Activated CD4-positive, alpha-beta T cell treated with anti-CD3 and anti-CD28 coated beads for 36 hours (primary cell): ENCODE measurements at regions of chr7 and their contacts with region 1.

Region 1: GRCh38 chr7:128425850-128426249 is 16.1 kb upstream of the IMPDH1 start:
- DNase-seq: peak; percentile 91
- ATAC-seq: peak; percentile 82
- H3K4me3 Mint-ChIP-seq: no peak overlapping the region
- H3K27ac Mint-ChIP-seq: no peak overlapping the region
- H3K4me1 Mint-ChIP-seq: no peaks in the 10 kb centered on the region
- H3K27me3 Mint-ChIP-seq: peaks cover 12% of the 10 kb centered on the region

Region 2: GRCh38 chr7:127359011-127359410 is 1066.8 kb before region 1 on chr7:
- CTCF ChIA-PET with region 1: no interaction called
- POLR2A ChIA-PET with region 1: no interaction called
- intact Hi-C with region 1: no loop called
- DNase-seq: no peak
- ATAC-seq: no peak
- H3K4me3 Mint-ChIP-seq: no peak overlapping the region
- H3K27ac Mint-ChIP-seq: no peak overlapping the region
- H3K4me1 Mint-ChIP-seq: peaks cover 4% of the 10 kb centered on the region
- H3K27me3 Mint-ChIP-seq: no peaks in the 10 kb centered on the region

Region 3: GRCh38 chr7:128387216-128388144 is 38.4 kb before region 1 on chr7:
- CTCF ChIA-PET with region 1: interaction called, 30 read pairs
- POLR2A ChIA-PET with region 1: no interaction called
- intact Hi-C with region 1: no loop called
- DNase-seq: peak; percentile 84
- ATAC-seq: peak; percentile 83
- H3K4me3 Mint-ChIP-seq: no peak overlapping the region
- H3K27ac Mint-ChIP-seq: no peak overlapping the region
- H3K4me1 Mint-ChIP-seq: peaks cover 2% of the 10 kb centered on the region
- H3K27me3 Mint-ChIP-seq: no peaks in the 10 kb centered on the region

Region 4: GRCh38 chr7:128409596-128410160 is 16.2 kb before region 1 on chr7 and contains the start of gene IMPDH1:
- CTCF ChIA-PET with region 1: interaction called, 185 read pairs
- POLR2A ChIA-PET with region 1: interaction called, 3 read pairs
- intact Hi-C with region 1: loop called (anchors 1 to 2 kb)
- DNase-seq: peak; percentile 92
- ATAC-seq: peak; percentile 85
- H3K4me3 Mint-ChIP-seq: peak within 1 kb of the TSS; percentile 78
- H3K27ac Mint-ChIP-seq: peak within 1 kb of the TSS; percentile 78
- H3K4me1 Mint-ChIP-seq: peaks cover 27% of the 10 kb centered on the region
- H3K27me3 Mint-ChIP-seq: no peaks in the 10 kb centered on the region
- total RNA-seq, gene IMPDH1: 59.0 to 60.7 TPM

Region 5: DNA sequence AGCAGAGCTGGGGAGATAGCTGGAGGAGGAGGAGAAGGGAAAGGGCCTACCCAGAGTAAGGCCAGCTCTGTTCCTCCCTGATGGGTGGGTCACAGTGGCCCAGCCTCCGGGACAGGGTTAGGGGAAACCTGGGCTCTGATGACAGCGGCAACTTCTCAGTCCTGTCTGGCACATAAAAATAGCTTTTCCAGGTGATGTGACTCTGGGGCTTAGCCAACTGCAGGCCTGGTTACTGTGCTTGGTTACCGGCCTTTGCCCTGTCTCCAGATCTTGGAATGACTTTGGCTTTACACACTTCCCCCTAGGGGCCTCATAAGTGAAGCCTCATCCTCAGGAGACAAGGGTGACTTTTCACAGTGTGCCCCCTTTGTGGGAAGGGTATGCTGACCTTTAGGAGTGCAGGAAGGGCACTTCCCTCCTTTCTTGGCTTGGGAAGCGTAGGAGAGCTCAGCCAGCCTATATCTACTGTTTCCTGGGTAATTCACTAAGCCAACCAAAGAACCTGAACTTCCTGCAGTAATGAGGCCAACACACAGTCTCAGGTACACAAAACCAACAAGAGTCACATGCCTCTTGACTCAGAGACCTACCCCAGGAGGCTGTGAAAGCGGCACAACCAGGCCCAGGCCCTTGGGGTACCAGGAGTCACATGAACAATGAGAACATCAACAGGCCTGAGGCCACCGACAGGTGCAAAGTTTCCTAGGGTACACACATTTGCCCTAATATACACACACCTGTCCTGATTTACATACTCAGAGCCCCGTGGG is 18.2 kb after region 1 on chr7:
- CTCF ChIA-PET with region 1: interaction called, 66 read pairs
- POLR2A ChIA-PET with region 1: no interaction called
- intact Hi-C with region 1: no loop called
- DNase-seq: no peak
- ATAC-seq: peak; percentile 59
- H3K4me3 Mint-ChIP-seq: no peak overlapping the region
- H3K27ac Mint-ChIP-seq: no peak overlapping the region
- H3K4me1 Mint-ChIP-seq: peaks cover 19% of the 10 kb centered on the region
- H3K27me3 Mint-ChIP-seq: no peaks in the 10 kb centered on the region

Region 6: DNA sequence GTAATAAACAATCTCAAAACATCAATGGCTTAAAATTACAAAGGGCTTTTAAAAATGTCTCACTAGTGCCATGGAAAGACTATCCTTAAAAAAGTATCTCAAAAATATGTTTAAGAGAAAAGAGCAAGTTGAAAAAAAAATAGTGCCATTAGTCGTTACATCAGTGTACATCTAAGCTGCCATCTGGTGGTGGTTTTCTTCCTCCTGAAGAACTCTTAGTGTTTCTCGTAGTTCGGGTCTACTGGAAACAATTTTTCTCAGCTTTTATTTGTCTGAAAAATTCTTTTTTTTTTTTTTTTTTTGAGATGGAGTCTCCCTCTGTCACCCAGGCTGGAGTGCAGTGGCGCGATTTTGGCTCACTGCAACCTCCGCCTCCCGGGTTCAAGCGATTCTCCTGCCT is 240.3 kb after region 1 on chr7:
- CTCF ChIA-PET with region 1: interaction called, 5 read pairs
- POLR2A ChIA-PET with region 1: no interaction called
- intact Hi-C with region 1: loop called in 1 of 2 experiments (anchors 1 kb)
- DNase-seq: no peak
- ATAC-seq: no peak
- H3K4me3 Mint-ChIP-seq: no peak overlapping the region
- H3K27ac Mint-ChIP-seq: no peak overlapping the region
- H3K4me1 Mint-ChIP-seq: no peaks in the 10 kb centered on the region
- H3K27me3 Mint-ChIP-seq: no peaks in the 10 kb centered on the region